Activated T-helper 1 cell treated with anti-CD3 and anti-CD28 coated beads, Interleukin-12 subunit alpha, Interleukin-12 subunit beta, Interleukin-2, Interleukin-4 antibody, amounts not matched to agents 30 ng/mL and 10 ng/mL and 1 ng/mL, durations not matched to agents 14 hours and 24 hours and 36 hours (primary cell): ENCODE measurements at regions of chr14 and their contacts with region 1.

Region 1: GRCh38 chr14:39432179-39432618 is at the start of gene FBXO33:
- DNase-seq: peak; percentile 96
- H3K4me3 Mint-ChIP-seq: peak within 1 kb of the TSS; percentile 99
- H3K27ac Mint-ChIP-seq: peak within 1 kb of the TSS; percentile 100
- H3K4me1 Mint-ChIP-seq: peaks cover 41% of the 10 kb centered on the region
- H3K27me3 Mint-ChIP-seq: no peaks in the 10 kb centered on the region
- total RNA-seq, gene FBXO33: 18.1 and 20.5 TPM in 2 replicates

Region 2: GRCh38 chr14:38065106-38065762 is 1367.0 kb before region 1 on chr14:
- intact Hi-C with region 1: loop called (anchors 10 kb)
- DNase-seq: peak; percentile 64
- H3K4me3 Mint-ChIP-seq: peak overlapping the region; percentile 52
- H3K27ac Mint-ChIP-seq: peak overlapping the region; percentile 78
- H3K4me1 Mint-ChIP-seq: peaks cover 15% of the 10 kb centered on the region
- H3K27me3 Mint-ChIP-seq: no peaks in the 10 kb centered on the region

Region 3: DNA sequence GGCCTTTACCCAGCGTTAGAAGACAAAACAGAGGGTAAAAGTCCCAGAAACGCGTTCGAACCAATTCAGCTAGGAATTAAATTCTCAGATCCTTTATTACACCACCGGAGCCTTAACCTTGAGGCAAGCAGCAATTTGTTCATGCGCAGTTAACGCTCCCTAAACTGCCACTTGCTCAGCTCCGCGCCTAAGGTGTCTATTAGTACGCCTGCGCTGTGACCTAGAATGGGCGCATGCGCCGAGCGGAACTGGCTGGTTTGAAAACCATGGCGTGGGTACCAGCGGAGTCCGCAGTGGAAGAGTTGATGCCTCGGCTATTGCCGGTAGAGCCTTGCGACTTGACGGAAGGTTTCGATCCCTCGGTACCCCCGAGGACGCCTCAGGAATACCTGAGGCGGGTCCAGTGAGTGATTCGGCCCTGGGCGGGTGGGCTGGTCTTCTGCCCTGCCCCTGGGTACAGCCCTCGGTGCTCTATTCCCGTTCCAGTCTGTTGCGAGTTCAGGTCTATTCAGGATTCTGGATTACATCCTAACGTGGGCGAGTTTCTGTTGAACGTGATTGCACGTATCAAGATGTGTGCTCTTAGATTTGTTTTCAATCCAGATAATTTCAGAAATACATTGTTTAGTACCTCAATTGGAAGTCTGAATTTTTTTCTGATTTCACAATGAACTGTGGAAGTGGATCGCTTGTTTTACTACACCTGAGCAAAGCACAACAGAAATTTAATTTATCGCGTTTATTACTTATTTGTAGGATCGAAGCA is 317.9 kb before region 1 on chr14 and contains the start of gene GEMIN2:
- intact Hi-C with region 1: loop called (anchors 1 kb)
- DNase-seq: peak; percentile 94
- H3K4me3 Mint-ChIP-seq: peak within 1 kb of the TSS; percentile 92
- H3K27ac Mint-ChIP-seq: peak within 1 kb of the TSS; percentile 96
- H3K4me1 Mint-ChIP-seq: peaks cover 10% of the 10 kb centered on the region
- H3K27me3 Mint-ChIP-seq: no peaks in the 10 kb centered on the region
- total RNA-seq, gene GEMIN2: 22.2 and 23.7 TPM in 2 replicates

Region 4: DNA sequence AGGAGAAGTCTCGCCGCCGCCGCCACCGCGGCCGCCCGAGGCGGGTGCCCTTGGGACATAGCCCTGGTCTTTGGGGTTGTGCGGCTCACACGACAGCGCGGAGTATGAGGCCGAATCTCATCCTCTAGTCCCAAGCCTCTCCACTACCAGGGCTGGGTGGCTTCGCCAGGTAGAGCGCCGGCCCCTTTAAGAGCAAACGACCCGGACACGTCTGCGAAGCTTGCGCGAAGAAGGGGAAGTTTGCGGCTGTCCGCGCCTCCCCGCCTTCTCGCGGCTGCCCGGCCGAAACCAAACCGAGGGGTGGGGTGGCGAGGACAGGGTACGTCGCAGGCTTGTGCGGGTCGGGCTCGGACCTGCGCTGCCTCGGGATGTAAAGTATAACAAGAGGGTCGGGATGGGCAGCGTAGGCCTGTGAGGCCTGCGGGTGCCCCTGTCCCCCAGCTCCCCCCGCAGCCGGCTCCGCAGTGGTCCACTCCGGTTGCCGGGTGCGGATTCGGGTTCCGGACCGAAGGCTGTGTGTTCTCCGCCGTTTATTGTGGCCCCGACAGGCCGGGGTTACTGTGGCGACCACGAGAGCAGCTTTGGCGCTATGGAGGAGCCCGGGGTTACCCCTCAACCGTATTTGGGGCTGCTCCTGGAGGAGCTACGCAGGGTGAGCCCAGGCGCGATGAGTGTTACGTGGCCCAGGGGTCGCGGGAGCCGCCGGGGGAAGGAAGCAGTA is 165.2 kb before region 1 on chr14:
- intact Hi-C with region 1: loop called (anchors 1 kb)
- DNase-seq: peak; percentile 76
- H3K4me3 Mint-ChIP-seq: peak overlapping the region; percentile 80
- H3K27ac Mint-ChIP-seq: peak overlapping the region; percentile 79
- H3K4me1 Mint-ChIP-seq: peaks cover 52% of the 10 kb centered on the region
- H3K27me3 Mint-ChIP-seq: no peaks in the 10 kb centered on the region

Region 5: DNA sequence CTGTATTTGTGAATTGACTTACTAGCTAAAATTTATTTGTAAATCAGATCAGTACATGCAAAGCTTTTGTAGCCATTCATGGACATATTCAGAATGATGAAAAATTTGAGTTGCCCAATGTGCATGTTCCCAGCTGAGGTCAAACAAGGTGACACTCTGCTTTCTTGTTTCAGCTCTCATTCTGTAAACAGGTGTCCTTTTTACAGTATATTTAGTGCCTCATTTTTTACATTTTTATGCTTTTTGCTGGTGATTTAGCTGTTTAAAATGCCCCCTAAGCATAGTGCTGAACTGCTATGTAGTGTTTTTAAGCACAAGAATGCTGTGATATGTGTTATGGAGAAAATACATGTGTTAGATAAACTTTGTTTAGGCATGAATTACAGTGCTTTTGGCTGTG is 122.1 kb before region 1 on chr14:
- intact Hi-C with region 1: no loop called
- DNase-seq: no peak
- H3K4me3 Mint-ChIP-seq: no peak overlapping the region
- H3K27ac Mint-ChIP-seq: no peak overlapping the region
- H3K4me1 Mint-ChIP-seq: no peaks in the 10 kb centered on the region
- H3K27me3 Mint-ChIP-seq: no peaks in the 10 kb centered on the region

Region 6: GRCh38 chr14:39342768-39343167 is 89.4 kb before region 1 on chr14:
- intact Hi-C with region 1: no loop called
- DNase-seq: no peak
- H3K4me3 Mint-ChIP-seq: no peak overlapping the region
- H3K27ac Mint-ChIP-seq: no peak overlapping the region
- H3K4me1 Mint-ChIP-seq: peaks cover 14% of the 10 kb centered on the region
- H3K27me3 Mint-ChIP-seq: no peaks in the 10 kb centered on the region

Region 7: GRCh38 chr14:39406560-39406959 is 25.6 kb before region 1 on chr14:
- intact Hi-C with region 1: no loop called
- DNase-seq: no peak
- H3K4me3 Mint-ChIP-seq: no peak overlapping the region
- H3K27ac Mint-ChIP-seq: no peak overlapping the region
- H3K4me1 Mint-ChIP-seq: no peaks in the 10 kb centered on the region
- H3K27me3 Mint-ChIP-seq: no peaks in the 10 kb centered on the region

Region 8: DNA sequence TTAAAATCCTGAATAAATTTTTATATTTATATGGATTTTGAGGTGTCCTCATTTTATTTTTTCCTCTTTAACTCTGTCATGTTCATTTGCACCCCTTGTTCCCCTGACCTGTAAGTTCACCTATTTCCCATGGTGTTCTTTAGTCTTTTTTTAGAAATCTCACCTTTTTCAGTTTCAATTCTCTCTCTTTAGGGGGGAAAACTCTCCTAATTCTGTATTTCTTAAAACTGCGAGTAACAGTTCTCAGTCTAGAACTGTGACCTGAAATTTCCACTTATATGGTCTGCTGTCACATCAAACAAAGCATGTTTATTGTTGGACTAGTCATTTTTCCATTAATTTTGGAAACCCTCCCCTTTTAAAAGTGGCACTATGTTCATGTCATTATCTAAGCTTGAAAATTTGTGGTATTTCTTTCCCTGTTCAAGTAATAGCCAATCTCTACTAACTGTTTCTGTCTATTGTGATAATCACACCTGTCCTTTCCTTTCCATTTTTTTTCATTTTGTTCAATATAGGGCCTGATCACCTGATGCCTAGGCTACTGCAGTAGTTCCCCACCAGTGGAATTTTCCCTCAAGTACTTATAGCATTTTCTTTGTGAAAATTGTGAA is 14.0 kb after region 1 on chr14:
- intact Hi-C with region 1: loop called (anchors 1 kb)
- DNase-seq: no peak
- H3K4me3 Mint-ChIP-seq: no peak overlapping the region
- H3K27ac Mint-ChIP-seq: peak overlapping the region; percentile 36
- H3K4me1 Mint-ChIP-seq: peaks cover 42% of the 10 kb centered on the region
- H3K27me3 Mint-ChIP-seq: no peaks in the 10 kb centered on the region